ENCODE measurements at regions of chr4 and their contacts with region 1.

Region 1: DNA sequence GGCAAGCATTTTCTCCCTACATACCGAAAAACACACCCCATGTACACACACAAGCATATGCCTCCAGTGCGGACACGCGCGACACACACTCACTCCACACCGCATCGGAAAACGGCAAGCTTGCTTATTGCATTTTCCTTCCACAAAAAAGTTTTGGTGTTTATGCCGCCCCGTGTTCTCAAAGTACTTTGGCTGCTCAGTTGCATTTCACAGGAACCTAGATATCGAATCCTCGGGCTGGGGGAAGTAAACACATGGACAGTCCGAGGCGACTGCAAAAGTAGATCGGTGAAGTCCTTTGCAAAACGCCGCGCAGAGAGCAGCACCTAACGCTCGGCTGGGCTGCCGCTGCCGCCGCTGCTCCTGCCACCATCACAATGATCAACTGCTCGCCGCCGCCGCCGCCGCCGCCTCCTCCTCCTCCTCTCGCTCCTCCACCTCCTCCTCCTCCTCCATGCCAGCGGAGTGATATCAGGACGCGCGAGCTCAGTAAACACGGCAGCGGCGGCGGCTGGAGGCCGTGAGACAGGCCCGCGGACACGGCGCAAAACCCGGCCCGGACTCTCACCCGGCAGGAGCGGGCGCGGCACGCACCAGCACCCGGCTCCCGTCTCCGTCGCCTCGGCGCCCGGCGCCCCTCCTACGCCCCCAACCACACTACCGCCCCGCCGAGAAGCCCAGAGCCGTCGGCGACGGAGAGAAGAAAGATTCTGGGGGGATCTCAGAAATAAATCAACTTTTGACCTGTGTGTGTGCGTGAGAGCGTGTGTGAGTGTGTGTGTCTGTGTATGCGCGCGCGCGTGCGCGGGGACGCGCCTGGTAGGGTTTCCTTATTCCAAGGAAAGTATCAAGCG is at the start of gene MAML3:
- DNase-seq: peak; percentile 95
- H3K4me3 ChIP-seq: peak within 1 kb of the TSS; percentile 64 to 91 (median 67)
- H3K27ac ChIP-seq: peak within 1 kb of the TSS; percentile 99
- H3K4me1 ChIP-seq: peaks cover 10% of the 10 kb centered on the region
- H3K27me3 ChIP-seq: no peaks in the 10 kb centered on the region
- CTCF ChIP-seq: no peak
- POLR2A ChIP-seq: peak; percentile 53
- total RNA-seq, gene MAML3: 20.1 and 20.3 TPM in 2 replicates

Region 2: GRCh38 chr4:139761461-139761860 is 392.5 kb before region 1 on chr4:
- CTCF ChIA-PET with region 1: no interaction called
- POLR2A ChIA-PET with region 1: no interaction called
- dilution Hi-C with region 1: no loop called
- intact Hi-C with region 1: loop called (anchors 2 kb)
- DNase-seq: no peak
- H3K4me3 ChIP-seq: no peak overlapping the region
- H3K27ac ChIP-seq: no peak overlapping the region
- H3K4me1 ChIP-seq: peaks cover 41% of the 10 kb centered on the region
- H3K27me3 ChIP-seq: no peaks in the 10 kb centered on the region
- CTCF ChIP-seq: peak; percentile 19 to 25
- POLR2A ChIP-seq: no peak

Region 3: DNA sequence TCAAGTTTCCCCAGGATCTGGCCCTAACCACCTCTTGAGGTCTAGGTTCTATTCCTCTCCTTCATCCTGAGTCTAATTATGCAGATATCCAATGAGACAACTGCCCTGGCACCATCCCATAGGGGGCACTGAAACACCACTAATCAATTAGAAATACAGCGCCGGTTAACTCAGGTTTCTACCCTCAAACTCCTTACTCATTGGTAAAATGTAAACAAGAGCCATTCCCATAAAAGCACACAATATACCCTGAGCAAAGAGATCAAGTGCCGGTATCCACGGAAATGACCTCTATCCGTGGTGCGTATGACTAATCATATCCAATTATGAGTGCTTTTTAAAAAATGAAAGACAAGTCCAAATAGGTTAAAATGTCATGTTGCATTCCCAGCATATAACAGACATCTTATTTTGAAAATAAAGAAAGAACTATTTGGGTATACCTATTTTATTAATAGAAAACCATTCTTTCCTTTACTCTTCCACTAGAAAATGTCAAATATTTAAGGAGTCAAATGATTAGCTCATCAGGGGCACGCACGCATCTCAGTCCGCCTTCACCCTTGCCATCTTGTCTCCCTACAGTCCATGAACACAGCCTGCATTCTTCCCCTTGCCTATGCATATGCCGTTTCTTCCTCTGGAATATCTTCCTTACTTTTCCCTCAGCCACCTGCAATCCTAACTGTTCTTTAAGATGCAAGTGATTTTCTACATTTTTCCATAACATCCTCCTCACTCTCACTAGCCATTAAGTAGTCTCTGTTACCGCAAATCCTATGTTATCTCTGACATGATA is 141.1 kb before region 1 on chr4:
- CTCF ChIA-PET with region 1: interaction called, 9 read pairs
- POLR2A ChIA-PET with region 1: no interaction called
- dilution Hi-C with region 1: no loop called
- intact Hi-C with region 1: loop called (anchors 1 kb)
- DNase-seq: peak; percentile 92
- H3K4me3 ChIP-seq: no peak overlapping the region
- H3K27ac ChIP-seq: peak overlapping the region; percentile 49
- H3K4me1 ChIP-seq: peaks cover 17% of the 10 kb centered on the region
- H3K27me3 ChIP-seq: no peaks in the 10 kb centered on the region
- CTCF ChIP-seq: peak; percentile 62 to 74
- POLR2A ChIP-seq: no peak

Region 4: DNA sequence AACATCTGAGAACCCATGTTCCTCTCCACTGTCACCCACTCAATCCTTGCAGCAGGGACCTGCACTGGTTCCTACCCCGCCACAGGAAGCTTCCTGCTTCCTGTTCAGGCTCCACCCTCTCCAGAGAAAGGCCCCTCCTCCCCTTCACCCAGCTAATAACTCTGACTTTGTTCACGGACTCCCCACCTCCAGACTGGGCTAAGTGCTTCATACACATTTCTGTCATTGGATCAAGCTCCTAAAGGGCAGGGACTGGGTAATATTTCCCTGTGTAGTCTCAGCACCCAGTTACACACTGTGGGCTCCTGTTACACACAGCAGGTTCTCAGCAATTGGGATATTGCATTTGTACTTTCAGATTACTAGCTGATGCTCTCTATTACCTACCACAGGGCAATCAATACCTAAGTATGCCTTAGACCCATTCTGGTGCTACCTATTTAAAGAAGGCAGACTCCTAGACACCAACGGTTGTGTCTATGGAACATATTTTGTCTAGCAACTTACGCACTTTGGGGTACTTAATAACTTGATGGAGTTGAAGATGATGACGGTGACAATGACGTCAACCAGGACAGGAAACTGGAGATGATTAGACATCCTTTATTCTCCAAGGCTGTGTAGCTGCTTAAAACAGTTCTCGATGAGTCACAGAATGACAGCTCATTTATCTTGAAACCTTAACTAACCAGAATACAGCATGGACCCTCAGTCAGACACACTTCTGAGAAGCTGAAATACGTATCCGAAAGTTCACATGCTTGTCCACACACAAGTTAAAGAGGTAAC is 58.1 kb before region 1 on chr4:
- CTCF ChIA-PET with region 1: interaction called, 12 read pairs
- POLR2A ChIA-PET with region 1: interaction called, 17 read pairs
- dilution Hi-C with region 1: no loop called
- intact Hi-C with region 1: loop called (anchors 1 kb)
- DNase-seq: peak; percentile 95
- H3K4me3 ChIP-seq: peak overlapping the region in 1 of 3 experiments; percentile 57
- H3K27ac ChIP-seq: peak overlapping the region; percentile 100
- H3K4me1 ChIP-seq: peaks cover 97% of the 10 kb centered on the region
- H3K27me3 ChIP-seq: no peaks in the 10 kb centered on the region
- CTCF ChIP-seq: no peak
- POLR2A ChIP-seq: peak; percentile 53

Region 5: GRCh38 chr4:140243278-140243753 is 89.4 kb after region 1 on chr4:
- CTCF ChIA-PET with region 1: interaction called, 15 read pairs
- POLR2A ChIA-PET with region 1: interaction called, 4 read pairs
- dilution Hi-C with region 1: no loop called
- intact Hi-C with region 1: no loop called
- DNase-seq: peak; percentile 68
- H3K4me3 ChIP-seq: no peak overlapping the region
- H3K27ac ChIP-seq: no peak overlapping the region
- H3K4me1 ChIP-seq: peaks cover 21% of the 10 kb centered on the region
- H3K27me3 ChIP-seq: no peaks in the 10 kb centered on the region
- CTCF ChIP-seq: no peak
- POLR2A ChIP-seq: no peak

Region 6: GRCh38 chr4:140373328-140374129 is 219.6 kb after region 1 on chr4 and contains the start of gene SCOC:
- CTCF ChIA-PET with region 1: no interaction called
- POLR2A ChIA-PET with region 1: no interaction called
- dilution Hi-C with region 1: no loop called
- intact Hi-C with region 1: loop called (anchors 5 kb)
- DNase-seq: peak; percentile 100
- H3K4me3 ChIP-seq: peak within 1 kb of the TSS; percentile 76 to 92 (median 79)
- H3K27ac ChIP-seq: peak within 1 kb of the TSS; percentile 71
- H3K4me1 ChIP-seq: peaks cover 14% of the 10 kb centered on the region
- H3K27me3 ChIP-seq: no peaks in the 10 kb centered on the region
- CTCF ChIP-seq: no peak
- POLR2A ChIP-seq: peak; percentile 80
- total RNA-seq, gene SCOC: 38.3 and 38.5 TPM in 2 replicates

Measured in endothelial cell of umbilical vein (primary cell).